CD14-positive monocyte (primary cell): ENCODE measurements at regions of chr7 and their contacts with region 1.

Region 1: GRCh38 chr7:129266181-129266580 is 41.4 kb downstream of the AHCYL2 start:
- DNase-seq: no peak
- H3K4me3 ChIP-seq: no peak overlapping the region
- H3K4me3 Mint-ChIP-seq: no peak overlapping the region
- H3K27ac ChIP-seq: no peak overlapping the region
- H3K27ac Mint-ChIP-seq: no peak overlapping the region
- H3K4me1 ChIP-seq: peaks cover 27 to 41% of the 10 kb centered on the region in 2 donors
- H3K4me1 Mint-ChIP-seq: peaks cover 36% of the 10 kb centered on the region
- H3K27me3 ChIP-seq: no peaks in the 10 kb centered on the region
- H3K27me3 Mint-ChIP-seq: no peaks in the 10 kb centered on the region
- CTCF ChIP-seq: no peak

Region 2: GRCh38 chr7:129150199-129150996 is 115.8 kb before region 1 on chr7:
- intact Hi-C with region 1: no loop called
- DNase-seq: peak in 2 of 3 donors; percentile 36 to 39
- H3K4me3 ChIP-seq: no peak overlapping the region
- H3K4me3 Mint-ChIP-seq: peak overlapping the region in 1 of 2 donors; percentile 76
- H3K27ac ChIP-seq: no peak overlapping the region
- H3K27ac Mint-ChIP-seq: peak overlapping the region in 4 of 7 donors; percentile 15 to 73 (median 54)
- H3K4me1 ChIP-seq: peaks cover 46 to 47% of the 10 kb centered on the region in 2 donors
- H3K4me1 Mint-ChIP-seq: peaks cover 52% of the 10 kb centered on the region
- H3K27me3 ChIP-seq: no peaks in the 10 kb centered on the region
- H3K27me3 Mint-ChIP-seq: peaks cover 4 to 7% (median 6%) of the 10 kb centered on the region in 3 donors
- CTCF ChIP-seq: no peak

Region 3: DNA sequence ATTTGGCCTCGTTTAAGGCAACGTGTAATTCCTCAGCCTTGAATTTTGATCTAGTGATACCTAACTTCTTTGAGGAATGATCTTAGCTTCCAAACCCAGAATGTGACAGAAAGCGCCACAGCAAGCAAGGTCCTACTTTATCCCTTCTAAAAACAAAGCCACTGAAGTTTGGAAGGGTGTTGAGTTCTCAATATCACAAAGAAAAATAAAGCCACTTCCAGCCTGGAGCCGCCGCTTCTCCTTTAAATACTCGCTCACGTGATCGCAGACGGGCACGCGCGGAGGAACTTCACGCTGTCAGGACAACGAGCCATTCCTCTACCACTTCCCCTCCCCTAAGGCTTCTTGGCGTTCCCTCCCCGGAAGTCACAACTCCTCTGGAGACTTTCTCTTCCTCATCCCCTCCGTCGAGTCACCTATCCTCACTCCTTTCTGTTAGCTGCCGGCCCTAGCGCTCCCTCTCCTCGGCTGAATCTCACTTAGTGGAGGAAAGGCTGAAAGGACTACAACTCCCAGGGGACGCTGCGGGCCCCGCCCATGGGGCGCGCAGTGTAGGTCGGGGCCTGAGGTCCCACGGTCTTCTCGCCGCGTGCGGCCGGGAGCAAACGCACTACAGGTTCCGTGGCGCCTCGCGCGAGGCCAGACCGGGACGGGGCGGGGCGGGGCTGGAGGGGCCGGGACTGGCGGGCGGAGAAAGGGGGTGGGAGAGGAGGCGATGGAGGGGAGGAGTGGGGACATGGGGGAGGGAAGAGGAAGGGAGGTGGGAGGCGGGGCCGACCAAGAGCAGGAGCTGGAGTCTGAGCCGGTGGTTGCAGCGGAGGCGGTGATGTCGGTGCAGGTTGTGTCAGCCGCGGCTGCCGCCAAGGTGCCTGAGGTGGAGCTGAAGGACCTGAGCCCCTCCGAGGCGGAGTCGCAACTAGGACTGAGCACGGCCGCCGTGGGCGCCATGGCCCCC is 41.7 kb before region 1 on chr7 and contains the start of gene AHCYL2:
- intact Hi-C with region 1: loop called (anchors 2 to 5 kb)
- DNase-seq: peak; percentile 93 to 96 (median 95)
- H3K4me3 ChIP-seq: peak within 1 kb of the TSS; percentile 69 to 88 (median 83)
- H3K4me3 Mint-ChIP-seq: peak within 1 kb of the TSS; percentile 94 to 99
- H3K27ac ChIP-seq: peak within 1 kb of the TSS; percentile 96 to 99
- H3K27ac Mint-ChIP-seq: peak within 1 kb of the TSS; percentile 99 to 100 (median 100)
- H3K4me1 ChIP-seq: peaks cover 33 to 35% of the 10 kb centered on the region in 2 donors
- H3K4me1 Mint-ChIP-seq: peaks cover 34% of the 10 kb centered on the region
- H3K27me3 ChIP-seq: no peaks in the 10 kb centered on the region
- H3K27me3 Mint-ChIP-seq: peaks cover 0 to 1% (median 0%) of the 10 kb centered on the region in 3 donors
- CTCF ChIP-seq: no peak
- polyA plus RNA-seq, gene AHCYL2: 10.7 to 14.6 (median 12.1) TPM